WTC11 (cell line): ENCODE measurements at regions of chr7 and their contacts with region 1.

Region 1: DNA sequence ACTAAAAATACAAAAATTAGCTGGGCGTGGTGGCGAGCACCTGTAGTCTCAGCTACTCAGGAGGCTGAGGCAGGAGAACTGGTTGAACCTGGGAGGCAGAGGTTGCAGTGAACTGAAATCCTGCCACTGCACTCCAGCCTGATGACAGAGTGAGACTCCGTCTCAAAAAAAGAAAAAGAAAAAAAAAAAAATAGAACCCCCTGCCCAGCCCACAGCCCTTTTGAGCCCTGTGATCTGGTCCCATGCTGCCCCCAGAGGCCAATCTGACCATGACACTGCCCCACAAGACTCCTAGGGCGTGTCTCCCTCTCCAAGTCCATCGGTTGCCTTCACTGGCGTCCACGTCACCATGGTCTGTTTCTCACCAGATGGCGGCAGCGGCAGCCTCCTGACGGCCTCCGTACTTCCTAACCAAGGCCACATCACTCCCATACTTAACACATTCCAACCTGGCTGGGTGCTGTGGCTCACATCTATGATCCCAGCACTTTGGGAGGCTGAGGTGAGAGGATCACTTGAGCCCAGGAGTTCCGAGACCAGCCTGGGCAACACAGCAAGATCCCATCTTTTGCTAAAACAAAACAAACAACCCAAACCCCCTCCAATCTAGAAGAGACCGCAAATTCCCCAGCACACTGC is 18.0 kb downstream of the STX1A start:
- DNase-seq: peak; percentile 87
- ATAC-seq: peak; percentile 75
- H3K4me3 Mint-ChIP-seq: peak overlapping the region; percentile 24; the same call in 1 of the 2 replicates
- H3K27ac Mint-ChIP-seq: peak overlapping the region; percentile 63; the same call in 1 of the 2 replicates
- H3K4me1 Mint-ChIP-seq: peaks cover 15% of the 10 kb centered on the region
- H3K27me3 Mint-ChIP-seq: no peaks in the 10 kb centered on the region
- CTCF ChIP-seq: peak; percentile 62

Region 2: GRCh38 chr7:73593207-73594045 is 108.0 kb before region 1 on chr7:
- CTCF ChIA-PET with region 1: no interaction called
- POLR2A ChIA-PET with region 1: no interaction called
- DNase-seq: no peak
- ATAC-seq: no peak
- H3K4me3 Mint-ChIP-seq: no peak overlapping the region
- H3K27ac Mint-ChIP-seq: no peak overlapping the region
- H3K4me1 Mint-ChIP-seq: 0 out of 2 replicates have a peak, but pooled peaks cover 2% of the 10 kb centered on the region
- H3K27me3 Mint-ChIP-seq: peaks cover 22% of the 10 kb centered on the region
- CTCF ChIP-seq: no peak

Region 3: GRCh38 chr7:73667344-73668102 is 34.0 kb before region 1 on chr7 and contains the start of gene VPS37D:
- CTCF ChIA-PET with region 1: interaction called, 10 read pairs
- POLR2A ChIA-PET with region 1: no interaction called
- DNase-seq: peak; percentile 96
- ATAC-seq: peak; percentile 87
- H3K4me3 Mint-ChIP-seq: peak within 1 kb of the TSS; percentile 75
- H3K27ac Mint-ChIP-seq: no peak within 1 kb of the TSS; the same call in 1 of the 2 replicates
- H3K4me1 Mint-ChIP-seq: peaks cover 40% of the 10 kb centered on the region
- H3K27me3 Mint-ChIP-seq: peaks cover 30% of the 10 kb centered on the region
- CTCF ChIP-seq: peak; percentile 86
- total RNA-seq, gene VPS37D: 5.7 to 7.5 TPM (median 5.8 TPM) in 3 replicates